ENCODE measurements at regions of chr3 and their contacts with region 1.

Region 1: GRCh38 chr3:177430653-177431052 is 233.4 kb upstream of the TBL1XR1 start:
- DNase-seq: no peak
- H3K4me3 ChIP-seq: no peak overlapping the region
- H3K27ac ChIP-seq: no peak overlapping the region
- H3K4me1 ChIP-seq: no peaks in the 10 kb centered on the region
- H3K27me3 ChIP-seq: no peaks in the 10 kb centered on the region
- CTCF ChIP-seq: no peak

Region 2: GRCh38 chr3:177284383-177284881 is 146.2 kb before region 1 on chr3:
- CTCF ChIA-PET with region 1: no interaction called
- POLR2A ChIA-PET with region 1: no interaction called
- intact Hi-C with region 1: no loop called
- DNase-seq: no peak
- H3K4me3 ChIP-seq: no peak overlapping the region
- H3K27ac ChIP-seq: no peak overlapping the region
- H3K4me1 ChIP-seq: peaks cover 59% of the 10 kb centered on the region
- H3K27me3 ChIP-seq: no peaks in the 10 kb centered on the region
- CTCF ChIP-seq: no peak

Region 3: DNA sequence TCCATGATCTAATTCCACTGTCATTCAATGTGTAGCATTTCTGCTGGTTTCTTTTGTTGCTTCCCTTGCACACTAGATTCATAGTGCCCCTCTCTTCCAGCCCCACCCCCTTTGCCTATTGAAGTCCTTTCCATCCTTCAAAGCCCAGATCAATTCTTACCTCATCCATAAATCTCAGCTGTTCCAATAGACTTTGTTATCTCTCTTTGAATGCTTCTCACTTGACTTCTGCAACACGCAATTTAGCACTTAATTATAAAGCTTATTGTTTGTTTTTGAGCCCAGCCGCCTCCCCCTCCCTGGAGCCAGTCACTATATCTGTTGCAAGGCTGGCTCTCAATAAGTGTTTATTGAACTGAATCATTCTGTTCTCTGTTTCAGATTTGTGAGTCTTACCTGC is 58.8 kb before region 1 on chr3:
- CTCF ChIA-PET with region 1: no interaction called
- POLR2A ChIA-PET with region 1: interaction called, 11 read pairs
- intact Hi-C with region 1: no loop called
- DNase-seq: no peak
- H3K4me3 ChIP-seq: no peak overlapping the region
- H3K27ac ChIP-seq: no peak overlapping the region
- H3K4me1 ChIP-seq: no peaks in the 10 kb centered on the region
- H3K27me3 ChIP-seq: no peaks in the 10 kb centered on the region
- CTCF ChIP-seq: no peak